PC-3 (cell line): ENCODE measurements at regions of chr7 and their contacts with region 1.

Region 1: DNA sequence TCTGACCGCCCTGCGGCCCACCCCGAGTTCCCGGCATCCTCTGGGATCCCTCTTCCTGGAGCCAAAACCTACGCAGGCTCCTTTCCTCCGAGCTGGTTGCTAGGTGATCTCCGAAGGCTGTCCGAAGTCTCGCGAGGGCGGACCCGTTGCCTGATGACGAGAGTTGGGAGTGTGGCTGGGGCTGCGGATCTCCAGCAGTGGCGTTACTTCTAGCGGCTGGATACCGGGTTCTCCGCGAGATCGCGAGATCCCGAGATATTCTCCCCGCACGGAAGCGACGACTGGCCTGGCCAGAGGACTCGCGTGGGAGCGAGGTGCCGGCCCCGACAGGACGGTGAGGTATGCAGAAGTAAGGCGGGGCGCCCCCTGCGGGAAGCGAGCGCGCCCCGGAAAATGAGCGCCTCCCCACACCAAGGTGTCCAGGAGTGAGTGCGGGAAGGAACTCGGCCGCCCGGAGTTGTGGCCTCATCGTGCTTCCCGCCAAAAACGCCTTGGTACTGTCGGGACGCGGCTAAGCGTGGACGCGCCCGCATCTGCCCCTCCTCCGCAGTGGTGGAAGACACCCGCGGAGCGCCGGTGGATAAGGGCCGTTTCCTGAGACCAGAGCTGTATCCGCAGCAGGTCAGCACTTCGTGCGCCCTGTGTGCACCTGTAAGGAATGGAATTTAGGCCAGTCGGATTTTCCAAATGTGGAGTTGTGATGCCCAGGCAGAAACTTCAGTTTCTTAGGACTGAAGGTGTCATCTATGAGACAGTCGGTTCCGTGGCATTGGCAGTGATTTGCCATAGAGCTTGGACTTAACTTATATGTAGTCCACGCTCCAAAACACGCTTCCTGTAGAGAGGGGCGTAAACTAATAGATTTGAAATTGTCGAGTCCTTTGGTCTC is at the start of gene AGBL3:
- DNase-seq: peak; percentile 94
- ATAC-seq: peak; percentile 98
- H3K4me3 ChIP-seq: peak within 1 kb of the TSS; percentile 87
- H3K27ac ChIP-seq: peak within 1 kb of the TSS; percentile 45
- H3K4me1 ChIP-seq: peaks cover 20% of the 10 kb centered on the region; the same call in 1 of the 2 replicates
- H3K27me3 ChIP-seq: no peaks in the 10 kb centered on the region
- CTCF ChIP-seq: peak; percentile 74
- total RNA-seq, gene AGBL3: 1.9 and 2.5 TPM in 2 replicates

Region 2: GRCh38 chr7:133753513-133753912 is 1233.1 kb before region 1 on chr7:
- CTCF ChIA-PET with region 1: no interaction called
- POLR2A ChIA-PET with region 1: no interaction called
- intact Hi-C with region 1: no loop called
- DNase-seq: peak; percentile 74
- ATAC-seq: peak; percentile 91
- H3K4me3 ChIP-seq: no peak overlapping the region
- H3K27ac ChIP-seq: peak overlapping the region; percentile 45
- H3K4me1 ChIP-seq: peaks cover 20% of the 10 kb centered on the region
- H3K27me3 ChIP-seq: no peaks in the 10 kb centered on the region
- CTCF ChIP-seq: no peak

Region 3: GRCh38 chr7:134966681-134967080 is 19.9 kb before region 1 on chr7:
- CTCF ChIA-PET with region 1: no interaction called
- POLR2A ChIA-PET with region 1: interaction called, 6 read pairs
- intact Hi-C with region 1: loop called (anchors 1 kb)
- DNase-seq: peak; percentile 34
- ATAC-seq: peak; percentile 100
- H3K4me3 ChIP-seq: no peak overlapping the region
- H3K27ac ChIP-seq: no peak overlapping the region
- H3K4me1 ChIP-seq: no peaks in the 10 kb centered on the region
- H3K27me3 ChIP-seq: no peaks in the 10 kb centered on the region
- CTCF ChIP-seq: no peak

Region 4: DNA sequence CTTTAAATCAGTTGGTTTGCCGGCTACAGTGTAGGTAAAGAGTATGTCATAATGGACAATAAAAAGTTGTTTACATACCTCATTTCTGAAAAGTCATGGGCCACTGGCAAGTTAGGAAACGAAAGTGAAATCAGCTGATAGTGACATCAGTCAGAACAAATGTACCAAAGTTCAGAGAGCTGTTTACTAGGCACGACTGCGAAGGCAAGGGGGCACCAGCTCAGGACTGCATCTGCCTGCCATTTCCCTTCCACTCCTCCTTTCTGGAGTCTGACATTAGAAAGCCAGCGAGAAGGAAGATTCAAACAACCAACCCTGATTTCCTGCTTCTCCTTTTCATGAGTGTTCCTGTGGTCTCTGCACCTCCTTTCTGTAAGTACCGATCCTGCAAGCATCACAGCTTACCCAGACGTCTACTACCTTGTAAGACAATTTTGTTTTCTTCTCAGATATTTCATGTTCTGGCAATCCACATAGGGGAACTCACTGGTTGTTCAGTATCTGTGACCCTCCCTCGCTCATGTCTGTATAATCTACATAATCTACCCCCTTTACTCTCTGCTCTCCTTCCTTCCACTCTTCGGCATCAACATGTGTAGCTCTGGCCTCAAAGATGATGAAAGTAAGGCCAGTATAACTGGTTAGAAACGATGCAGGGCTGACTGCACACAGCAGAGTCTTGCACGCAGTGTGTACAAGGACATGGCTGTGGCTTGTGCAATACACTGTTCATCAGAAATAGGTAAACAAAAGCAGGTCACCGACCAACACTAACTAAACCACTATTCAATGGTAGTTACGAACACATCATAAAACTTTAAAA is 161.5 kb after region 1 on chr7 and contains the start of gene TMEM140:
- CTCF ChIA-PET with region 1: interaction called, 4 read pairs
- POLR2A ChIA-PET with region 1: no interaction called
- intact Hi-C with region 1: loop called (anchors 1 kb)
- DNase-seq: peak; percentile 75
- ATAC-seq: peak; percentile 80
- H3K4me3 ChIP-seq: peak within 1 kb of the TSS; percentile 64
- H3K27ac ChIP-seq: peak within 1 kb of the TSS; percentile 76
- H3K4me1 ChIP-seq: peaks cover 22% of the 10 kb centered on the region
- H3K27me3 ChIP-seq: no peaks in the 10 kb centered on the region
- CTCF ChIP-seq: no peak
- total RNA-seq, gene TMEM140: 0.52 TPM in 1 of 2 replicates, not detected in the other

Region 5: DNA sequence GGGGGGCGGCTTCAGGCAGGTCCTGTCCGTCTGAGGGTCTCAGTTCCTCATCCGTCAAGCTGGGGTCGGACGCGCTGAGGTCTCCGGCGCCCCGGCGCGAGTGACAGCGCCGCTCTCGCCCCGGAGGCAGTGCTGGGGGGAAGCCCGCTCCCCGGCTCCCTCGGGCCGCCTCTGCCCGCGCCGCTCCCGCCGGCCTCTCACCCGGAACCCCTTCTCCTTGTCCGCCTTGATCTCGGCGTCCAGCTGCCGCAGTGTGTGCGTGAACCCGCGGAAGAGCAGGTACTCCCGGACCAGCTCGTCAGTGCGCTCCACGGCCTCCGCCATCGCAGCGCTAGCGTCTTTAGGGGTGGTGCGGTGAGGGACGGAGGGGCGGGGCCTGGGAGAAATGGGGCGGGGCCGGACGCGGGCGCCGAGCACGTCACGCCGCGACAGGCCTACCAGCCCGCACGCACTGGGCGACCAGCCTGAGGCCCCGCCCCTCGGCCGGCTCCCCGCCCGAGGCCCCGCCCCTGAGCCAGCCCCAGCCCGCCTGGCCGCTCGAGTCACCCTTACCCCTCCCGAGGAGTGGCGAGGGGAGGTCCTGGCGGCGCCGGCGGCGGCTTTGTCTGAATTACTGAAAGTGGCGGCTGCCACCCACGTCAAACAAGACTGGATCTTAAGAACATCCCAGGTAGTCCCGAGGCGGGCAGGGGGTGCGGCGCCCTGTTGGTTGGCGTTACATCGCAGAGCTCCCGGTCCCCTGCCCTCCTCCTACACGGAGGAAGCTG is 224.8 kb after region 1 on chr7 and contains the start of gene WDR91:
- CTCF ChIA-PET with region 1: no interaction called
- POLR2A ChIA-PET with region 1: no interaction called
- intact Hi-C with region 1: loop called (anchors 5 kb)
- DNase-seq: peak; percentile 91
- ATAC-seq: peak; percentile 90
- H3K4me3 ChIP-seq: peak within 1 kb of the TSS; percentile 100
- H3K27ac ChIP-seq: no peak within 1 kb of the TSS
- H3K4me1 ChIP-seq: peaks cover 8% of the 10 kb centered on the region; the same call in 1 of the 2 replicates
- H3K27me3 ChIP-seq: no peaks in the 10 kb centered on the region
- CTCF ChIP-seq: peak; percentile 28; the same call in 1 of the 2 replicates
- total RNA-seq, gene WDR91: 12.3 and 23.0 TPM in 2 replicates